ENCODE measurements at regions of chr9 and their contacts with region 1.

Region 1: DNA sequence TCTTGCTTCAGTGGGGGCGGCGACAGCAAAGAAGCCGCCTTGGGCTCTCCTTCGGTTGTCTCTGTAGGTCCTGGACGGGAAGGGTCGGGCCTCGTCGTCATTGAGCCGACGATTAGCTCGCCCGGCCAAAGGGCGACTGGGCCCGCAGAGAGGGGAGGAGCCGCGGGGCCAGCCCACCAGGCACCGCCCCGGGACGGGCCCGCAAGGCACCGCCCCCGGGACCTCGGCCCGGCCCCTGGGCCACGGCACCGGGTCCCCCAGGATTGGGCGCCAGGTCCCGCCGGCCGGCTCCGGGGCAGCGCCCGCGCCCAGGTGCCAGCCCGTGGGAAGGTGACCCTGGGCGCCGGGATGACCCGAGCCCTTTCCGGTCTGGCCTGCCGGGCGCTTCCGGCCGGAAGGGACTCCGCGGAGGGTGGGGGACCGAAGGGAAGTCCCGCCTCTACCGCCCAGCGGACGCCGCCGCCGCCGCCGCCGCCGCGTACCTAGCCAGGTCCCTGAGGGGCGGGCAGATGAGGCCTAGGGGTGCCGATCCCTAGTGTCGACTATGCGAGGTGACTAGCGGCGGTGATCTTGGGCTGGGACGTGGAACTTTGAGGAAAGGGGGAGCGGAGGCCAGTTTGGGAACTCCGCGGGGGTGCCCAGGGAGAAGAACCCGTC is at the starts of genes GBA2 and RGP1:
- DNase-seq: peak; percentile 96
- H3K4me3 ChIP-seq: peak within 1 kb of the TSS; percentile 63 to 96 (median 80)
- H3K27ac ChIP-seq: peak within 1 kb of the TSS; percentile 89 to 99 (median 93)
- H3K4me1 ChIP-seq: peaks cover 34 to 73% (median 54%) of the 10 kb centered on the region in 6 donors
- H3K27me3 ChIP-seq: no peaks in the 10 kb centered on the region
- CTCF ChIP-seq: peak in 1 of 11 experiments; percentile 22
- POLR2A ChIP-seq: peak in 2 of 3 donors; percentile 20 to 44
- total RNA-seq, gene GBA2: 70.5 to 111 (median 74.3) TPM
- total RNA-seq, gene RGP1: 19.7 to 29.2 (median 22.0) TPM

Region 2: DNA sequence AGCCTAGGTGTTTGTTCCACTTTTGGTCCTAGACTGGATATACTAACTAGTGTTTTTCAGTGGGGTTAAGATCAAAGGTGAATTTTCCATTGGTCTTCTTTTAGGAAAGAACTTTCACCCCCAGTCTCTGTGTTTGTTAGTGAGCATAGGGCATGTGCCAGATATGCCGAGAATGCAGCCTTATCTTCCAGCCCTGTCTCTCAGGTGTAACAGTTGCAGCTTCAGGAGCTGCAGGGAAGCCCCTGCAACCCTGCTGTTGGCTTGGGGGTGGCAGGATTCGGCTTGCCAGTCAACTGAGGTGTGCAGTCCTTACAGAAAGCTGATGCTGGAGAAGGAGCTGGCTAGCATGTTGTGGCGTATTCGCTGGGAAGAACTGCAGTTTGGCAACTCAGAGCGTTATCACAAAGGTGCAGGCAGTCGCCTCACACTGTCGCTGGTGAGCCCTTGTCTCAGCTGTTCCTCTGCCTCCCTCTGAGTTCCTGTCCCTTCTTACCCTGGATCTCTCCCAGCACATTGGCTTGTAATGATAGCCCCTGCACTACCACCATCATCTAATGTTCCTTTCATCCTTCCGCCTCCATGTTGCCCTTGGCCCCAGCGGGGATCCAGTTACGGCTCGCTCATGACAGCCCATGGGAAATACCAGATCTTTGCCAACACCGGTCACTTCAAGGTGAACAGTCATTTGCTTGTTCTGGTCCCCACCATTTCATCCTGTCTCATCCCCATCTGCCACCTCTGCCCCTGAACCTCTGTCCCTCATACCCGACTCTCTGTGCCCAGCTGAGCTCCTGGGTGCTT is 52.5 kb after region 1 on chr9:
- intact Hi-C with region 1: loop called (anchors 10 kb)
- DNase-seq: no peak
- H3K4me3 ChIP-seq: no peak overlapping the region
- H3K27ac ChIP-seq: no peak overlapping the region
- H3K4me1 ChIP-seq: no peaks in the 10 kb centered on the region
- H3K27me3 ChIP-seq: no peaks in the 10 kb centered on the region
- CTCF ChIP-seq: no peak
- POLR2A ChIP-seq: no peak